Dorsolateral prefrontal cortex (tissue), 120 donors: ENCODE measurements at regions of chr16 and their contacts with region 1.

Region 1: DNA sequence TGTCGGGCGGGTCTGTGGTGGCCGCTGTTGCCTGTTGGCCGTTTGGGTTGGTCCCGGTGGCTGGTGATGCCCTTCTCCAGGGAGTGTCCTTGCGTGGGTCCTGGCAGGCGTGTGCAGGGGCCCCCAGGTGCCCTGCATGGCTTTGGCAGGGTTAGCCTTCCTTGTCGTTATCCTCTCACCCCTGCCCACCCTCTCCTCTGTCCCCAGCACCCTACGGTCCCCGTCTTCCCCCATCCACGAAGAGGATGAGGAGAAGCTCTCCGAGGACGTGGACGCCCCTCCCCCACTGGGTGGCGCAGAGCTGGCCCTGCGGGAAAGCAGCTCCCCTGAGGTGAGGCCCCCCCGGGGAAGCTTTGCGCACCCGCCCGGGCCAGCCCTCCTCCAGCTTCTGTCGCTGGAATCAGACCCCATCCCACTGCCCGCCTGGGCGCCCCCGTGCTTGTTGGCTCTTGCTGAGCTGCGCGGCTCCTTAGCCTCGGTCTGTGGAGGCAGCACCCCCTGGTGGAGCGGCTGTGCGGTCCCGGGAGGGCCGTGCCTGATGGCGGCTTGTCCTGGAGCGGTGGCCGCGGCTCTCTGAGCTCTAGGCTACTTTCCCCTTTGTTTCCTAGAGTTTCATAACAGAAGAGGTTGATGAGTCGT is 10.6 kb upstream of the NUDT16L1 start:
- DNase-seq: peak in 8 of 10 donors; percentile 59 to 77 (median 68)
- H3K4me3 ChIP-seq: peak overlapping the region in 36 of 59 donors; percentile 0 to 46 (median 24)
- H3K27ac ChIP-seq: peak overlapping the region in 53 of 59 donors; percentile 3 to 88 (median 58)
- H3K27me3 ChIP-seq: no peaks in the 10 kb centered on the region
- CTCF ChIP-seq: peak in 55 of 56 donors; percentile 21 to 83 (median 70)

Region 2: DNA sequence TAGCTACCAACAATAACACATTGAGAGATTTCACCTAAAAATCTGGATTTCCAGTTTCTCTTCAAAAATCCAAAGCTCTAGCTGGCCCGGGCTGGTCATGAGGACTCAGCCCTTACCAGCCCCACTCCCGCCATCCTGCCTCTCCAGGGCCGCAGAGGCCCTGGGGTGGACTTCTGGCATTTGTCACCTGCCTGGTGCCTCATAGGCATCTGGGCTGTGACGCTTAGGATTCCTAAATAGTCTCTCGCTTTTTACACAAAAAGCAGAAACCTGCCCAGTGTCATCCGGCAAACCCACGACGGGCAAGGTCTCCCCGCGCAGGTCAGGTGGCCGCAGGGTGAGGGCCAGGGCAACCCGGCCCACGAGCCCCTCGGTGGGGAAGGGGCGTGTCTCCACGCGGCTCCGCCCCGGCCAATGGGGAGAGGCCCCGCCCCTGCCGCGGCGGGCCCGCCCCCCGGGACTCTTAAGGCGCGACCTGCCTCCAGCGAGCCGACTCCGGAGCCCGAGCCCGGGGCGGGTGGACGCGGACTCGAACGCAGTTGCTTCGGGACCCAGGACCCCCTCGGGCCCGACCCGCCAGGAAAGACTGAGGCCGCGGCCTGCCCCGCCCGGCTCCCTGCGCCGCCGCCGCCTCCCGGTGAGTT is 311.3 kb before region 1 on chr16 and contains the start of gene VASN:
- intact Hi-C with region 1: no loop called
- DNase-seq: peak; percentile 50 to 87 (median 78)
- H3K4me3 ChIP-seq: peak within 1 kb of the TSS; percentile 39 to 84 (median 66)
- H3K27ac ChIP-seq: peak within 1 kb of the TSS in 57 of 59 donors; percentile 31 to 93 (median 79)
- H3K27me3 ChIP-seq: no peaks in the 10 kb centered on the region
- CTCF ChIP-seq: peak in 1 of 56 donors; percentile 11
- total RNA-seq, gene VASN: 3.9 to 49.4 (median 12.1) TPM

Region 3: GRCh38 chr16:4511441-4512082 is 171.2 kb before region 1 on chr16:
- intact Hi-C with region 1: loop called in 1 of 2 experiments (anchors 10 kb)
- DNase-seq: peak; percentile 55 to 85 (median 74)
- H3K4me3 ChIP-seq: no peak overlapping the region
- H3K27ac ChIP-seq: peak overlapping the region in 55 of 59 donors; percentile 11 to 89 (median 77)
- H3K27me3 ChIP-seq: no peaks in the 10 kb centered on the region
- CTCF ChIP-seq: peak in 55 of 56 donors; percentile 32 to 75 (median 62)

Region 4: DNA sequence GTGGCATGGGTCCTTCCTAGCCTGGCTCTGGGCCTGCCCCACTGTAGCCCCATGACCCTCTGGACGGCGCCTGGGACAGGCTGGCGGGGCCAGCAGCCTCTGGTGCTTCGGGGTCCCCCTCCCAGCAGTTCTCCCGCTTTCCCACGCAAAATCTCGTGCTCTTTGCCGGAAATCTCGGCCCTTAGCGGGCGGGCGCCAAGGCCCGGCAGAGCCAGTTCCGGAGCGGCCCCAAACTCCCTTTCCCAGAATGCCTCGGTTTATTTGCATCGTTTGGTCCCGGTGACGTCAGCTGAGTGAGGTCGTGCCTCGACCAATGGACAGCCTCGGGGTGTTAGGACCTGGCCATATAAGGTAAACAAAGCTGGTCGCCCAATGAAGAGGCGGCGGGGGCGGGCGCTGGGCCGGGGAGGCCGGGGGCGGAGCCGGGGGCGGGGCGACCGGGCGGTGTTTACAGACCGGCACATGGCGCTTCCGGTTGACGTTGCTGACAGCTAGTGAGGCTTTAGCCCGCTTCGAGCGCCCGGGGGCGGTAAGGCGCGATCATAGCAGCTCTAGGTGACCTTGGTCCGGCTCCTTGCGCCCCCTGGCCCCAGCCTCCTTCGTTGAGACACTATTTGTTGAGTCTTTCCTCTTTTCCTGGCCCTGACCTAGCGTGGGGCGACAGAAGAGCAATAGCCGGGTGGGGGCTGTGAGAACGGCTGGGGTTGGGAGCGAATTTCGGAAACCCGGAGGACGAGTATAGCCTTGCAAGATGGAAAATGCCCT is 66.5 kb before region 1 on chr16:
- intact Hi-C with region 1: loop called in 1 of 2 experiments (anchors 2 kb)
- DNase-seq: peak; percentile 98 to 100 (median 99)
- H3K4me3 ChIP-seq: peak overlapping the region; percentile 56 to 97 (median 81)
- H3K27ac ChIP-seq: peak overlapping the region; percentile 75 to 100 (median 98)
- H3K27me3 ChIP-seq: no peaks in the 10 kb centered on the region
- CTCF ChIP-seq: peak in 54 of 56 donors; percentile 15 to 77 (median 59)

Region 5: GRCh38 chr16:4624015-4624826 is 58.5 kb before region 1 on chr16 and contains the start of gene MGRN1:
- intact Hi-C with region 1: loop called in 1 of 2 experiments (anchors 2 kb)
- DNase-seq: peak; percentile 85 to 97 (median 94)
- H3K4me3 ChIP-seq: peak within 1 kb of the TSS; percentile 60 to 100 (median 96)
- H3K27ac ChIP-seq: peak within 1 kb of the TSS; percentile 68 to 99 (median 94)
- H3K27me3 ChIP-seq: no peaks in the 10 kb centered on the region
- CTCF ChIP-seq: peak; percentile 78 to 97 (median 90)
- total RNA-seq, gene MGRN1: 92.0 to 167 (median 124) TPM

Region 6: DNA sequence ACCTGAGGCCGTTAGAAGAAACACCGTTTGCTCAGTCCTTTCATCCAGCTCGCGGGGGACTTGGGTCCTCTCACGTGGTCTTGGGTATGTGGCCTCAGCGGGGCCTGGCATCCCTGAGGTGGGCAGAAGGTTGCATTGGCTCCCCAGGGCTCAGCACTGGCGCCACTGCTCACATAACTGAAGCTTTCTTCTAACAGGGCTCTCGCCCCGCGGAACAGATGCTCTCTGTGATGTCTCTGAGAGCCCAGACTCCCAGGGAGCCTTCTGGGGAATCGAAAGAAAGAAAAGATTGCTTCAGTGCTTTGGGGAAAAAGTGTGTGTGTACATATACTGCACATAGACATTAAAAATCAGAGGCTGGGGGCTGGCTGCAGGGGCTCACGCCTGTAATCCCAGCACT is 48.0 kb before region 1 on chr16:
- intact Hi-C with region 1: no loop called
- DNase-seq: no peak
- H3K4me3 ChIP-seq: peak overlapping the region in 3 of 59 donors; percentile 0 to 18 (median 12)
- H3K27ac ChIP-seq: peak overlapping the region in 51 of 59 donors; percentile 3 to 80 (median 56)
- H3K27me3 ChIP-seq: no peaks in the 10 kb centered on the region
- CTCF ChIP-seq: no peak